ENCODE measurements at regions of chr5 and their contacts with region 1.

Region 1: DNA sequence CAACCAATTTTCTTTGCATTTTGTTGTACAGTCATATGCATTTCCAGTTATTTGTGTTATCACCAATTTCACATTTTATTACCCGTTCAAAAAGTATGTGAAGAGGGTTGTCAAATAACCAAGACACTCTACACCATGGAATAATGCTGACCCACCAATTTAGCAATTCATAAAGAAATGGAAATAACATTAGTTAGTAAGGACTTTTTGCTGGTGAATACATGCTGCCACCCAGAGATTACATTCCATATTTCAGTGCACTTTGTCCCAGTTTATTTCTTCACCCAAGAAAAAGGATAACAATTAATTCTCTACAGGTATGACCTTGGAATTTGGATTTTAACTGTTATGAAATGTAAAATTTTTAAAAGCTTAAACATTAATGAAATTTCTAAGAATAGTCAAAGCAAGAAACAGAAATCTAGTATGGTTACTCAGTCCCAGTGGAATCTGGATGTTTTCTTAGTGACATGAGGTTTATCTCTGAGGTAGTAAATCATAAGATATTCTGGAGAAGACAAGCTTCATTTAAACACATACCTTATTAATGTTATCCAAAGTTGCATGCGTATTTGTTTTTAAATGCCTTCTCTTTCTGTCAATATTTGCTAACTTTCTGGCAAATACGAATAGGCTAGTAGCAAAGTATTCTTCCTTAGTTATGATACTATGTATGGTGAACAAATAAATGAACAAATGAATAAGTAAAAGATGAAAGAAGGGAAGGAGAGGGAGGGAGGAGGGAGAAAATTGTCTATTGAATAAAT is 100.6 kb downstream of the CETN3 start:
- DNase-seq: no peak
- ATAC-seq: no peak
- H3K4me3 ChIP-seq: no peak overlapping the region
- H3K27ac ChIP-seq: no peak overlapping the region
- H3K4me1 ChIP-seq: no peaks in the 10 kb centered on the region
- H3K27me3 ChIP-seq: no peaks in the 10 kb centered on the region
- CTCF ChIP-seq: no peak
- EP300 ChIP-seq: no peak
- POLR2A ChIP-seq: no peak
- RAD21 ChIP-seq: no peak

Region 2: GRCh38 chr5:89878140-89879132 is 430.5 kb before region 1 on chr5:
- CTCF ChIA-PET with region 1: no interaction called
- POLR2A ChIA-PET with region 1: no interaction called
- RAD21 ChIA-PET with region 1: no interaction called
- SMC1A ChIA-PET with region 1: no interaction called
- in situ Hi-C with region 1: no loop called
- intact Hi-C with region 1: no loop called
- DNase-seq: no peak
- ATAC-seq: no peak
- H3K4me3 ChIP-seq: no peak overlapping the region
- H3K27ac ChIP-seq: no peak overlapping the region
- H3K4me1 ChIP-seq: no peaks in the 10 kb centered on the region
- H3K27me3 ChIP-seq: no peaks in the 10 kb centered on the region
- CTCF ChIP-seq: no peak
- EP300 ChIP-seq: no peak
- POLR2A ChIP-seq: no peak
- RAD21 ChIP-seq: no peak

Region 3: GRCh38 chr5:90368454-90369246 is 59.7 kb after region 1 on chr5:
- CTCF ChIA-PET with region 1: no interaction called
- POLR2A ChIA-PET with region 1: no interaction called
- RAD21 ChIA-PET with region 1: no interaction called
- SMC1A ChIA-PET with region 1: no interaction called
- in situ Hi-C with region 1: no loop called
- intact Hi-C with region 1: loop called (anchors 5 kb)
- DNase-seq: peak; percentile 15
- ATAC-seq: peak; percentile 84
- H3K4me3 ChIP-seq: no peak overlapping the region
- H3K27ac ChIP-seq: no peak overlapping the region
- H3K4me1 ChIP-seq: peaks cover 9% of the 10 kb centered on the region; the same call in 1 of the 2 replicates
- H3K27me3 ChIP-seq: no peaks in the 10 kb centered on the region
- CTCF ChIP-seq: no peak
- EP300 ChIP-seq: peak in 1 of 2 experiments; percentile 50; a peak in 2 of 4 replicates
- POLR2A ChIP-seq: no peak
- RAD21 ChIP-seq: no peak

Measured in GM12878 (cell line).